ENCODE measurements at regions of chr4 and their contacts with region 1.

Region 1: DNA sequence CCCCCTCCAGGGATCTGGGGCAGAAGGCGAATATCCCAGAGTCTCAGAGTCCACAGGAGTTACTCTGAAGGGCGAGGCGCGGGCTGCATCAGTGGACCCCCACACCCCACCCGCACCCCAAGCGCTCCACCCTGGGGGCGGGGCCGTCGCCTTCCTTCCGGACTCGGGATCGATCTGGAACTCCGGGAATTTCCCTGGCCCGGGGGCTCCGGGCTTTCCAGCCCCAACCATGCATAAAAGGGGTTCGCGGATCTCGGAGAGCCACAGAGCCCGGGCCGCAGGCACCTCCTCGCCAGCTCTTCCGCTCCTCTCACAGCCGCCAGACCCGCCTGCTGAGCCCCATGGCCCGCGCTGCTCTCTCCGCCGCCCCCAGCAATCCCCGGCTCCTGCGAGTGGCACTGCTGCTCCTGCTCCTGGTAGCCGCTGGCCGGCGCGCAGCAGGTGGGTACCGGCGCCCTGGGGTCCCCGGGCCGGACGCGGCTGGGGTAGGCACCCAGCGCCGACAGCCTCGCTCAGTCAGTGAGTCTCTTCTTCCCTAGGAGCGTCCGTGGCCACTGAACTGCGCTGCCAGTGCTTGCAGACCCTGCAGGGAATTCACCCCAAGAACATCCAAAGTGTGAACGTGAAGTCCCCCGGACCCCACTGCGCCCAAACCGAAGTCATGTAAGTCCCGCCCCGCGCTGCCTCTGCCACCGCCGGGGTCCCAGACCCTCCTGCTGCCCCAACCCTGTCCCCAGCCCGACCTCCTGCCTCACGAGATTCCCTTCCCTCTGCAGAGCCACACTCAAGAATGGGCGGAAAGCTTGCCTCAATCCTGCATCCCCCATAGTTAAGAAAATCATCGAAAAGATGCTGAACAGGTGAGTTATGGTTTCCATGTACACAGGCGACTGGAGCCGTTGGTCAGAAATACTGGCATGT is at the start of gene CXCL1:
- DNase-seq: peak; percentile 88
- H3K4me3 Mint-ChIP-seq: peak within 1 kb of the TSS; percentile 88
- H3K27ac Mint-ChIP-seq: peak within 1 kb of the TSS; percentile 29
- H3K4me1 Mint-ChIP-seq: peaks cover 18% of the 10 kb centered on the region
- H3K27me3 Mint-ChIP-seq: no peaks in the 10 kb centered on the region
- CTCF ChIP-seq: no peak
- total RNA-seq, gene CXCL1: 212 and 414 TPM in 2 replicates

Region 2: DNA sequence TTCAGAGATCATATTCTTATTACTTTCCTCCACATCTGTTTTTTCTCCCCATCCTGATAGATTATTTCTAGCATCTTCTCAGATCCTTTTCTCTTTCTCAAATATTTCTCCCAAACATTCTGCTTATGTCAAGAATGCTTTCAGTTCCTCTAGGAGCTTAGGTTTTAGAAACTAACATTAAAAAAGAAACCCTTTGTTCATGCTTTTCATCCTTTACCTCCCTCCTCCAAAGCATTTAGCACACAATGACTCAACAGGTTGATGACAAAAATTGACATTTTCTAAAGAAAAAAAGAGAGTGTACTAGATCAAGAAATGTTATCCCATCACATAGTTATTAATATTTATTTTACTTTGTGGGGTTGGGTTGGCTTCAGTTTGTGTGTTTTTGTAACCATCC is 481.8 kb before region 1 on chr4:
- CTCF ChIA-PET with region 1: no interaction called
- intact Hi-C with region 1: no loop called
- DNase-seq: no peak
- H3K4me3 Mint-ChIP-seq: no peak overlapping the region
- H3K27ac Mint-ChIP-seq: no peak overlapping the region
- H3K4me1 Mint-ChIP-seq: no peaks in the 10 kb centered on the region
- H3K27me3 Mint-ChIP-seq: no peaks in the 10 kb centered on the region
- CTCF ChIP-seq: no peak

Region 3: DNA sequence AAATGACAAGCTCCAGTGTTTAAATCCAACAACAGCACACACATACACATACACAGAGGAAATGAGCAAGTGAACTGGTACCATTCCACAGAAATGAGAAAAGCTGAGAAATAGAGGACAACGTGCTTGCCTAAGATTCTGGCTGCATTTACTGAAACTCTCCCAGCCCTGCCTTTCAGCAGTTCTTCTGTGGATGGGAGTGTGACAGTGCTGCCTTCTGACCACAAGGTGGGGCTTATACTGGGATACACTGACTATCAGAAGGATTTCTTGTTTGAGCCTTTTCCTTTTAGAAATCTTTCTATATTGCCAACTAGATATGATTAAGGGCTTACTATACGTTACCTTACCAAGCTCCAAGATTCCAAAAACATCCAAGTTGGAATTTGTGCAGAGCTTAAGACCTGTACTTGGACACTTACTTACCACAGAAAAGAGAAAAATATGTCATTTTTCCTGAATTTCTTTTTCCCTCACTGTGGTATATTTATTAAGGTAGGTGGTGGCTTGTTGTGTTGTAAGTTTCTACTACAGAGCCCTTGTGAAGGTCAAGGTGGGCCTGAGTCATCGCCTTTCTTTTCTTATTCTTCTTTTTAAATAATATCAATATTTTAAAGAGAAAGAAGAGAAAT is 139.7 kb before region 1 on chr4:
- CTCF ChIA-PET with region 1: interaction called, 8 read pairs
- intact Hi-C with region 1: loop called (anchors 5 kb)
- DNase-seq: peak; percentile 59
- H3K4me3 Mint-ChIP-seq: peak overlapping the region; percentile 20
- H3K27ac Mint-ChIP-seq: peak overlapping the region; percentile 89
- H3K4me1 Mint-ChIP-seq: peaks cover 82% of the 10 kb centered on the region
- H3K27me3 Mint-ChIP-seq: no peaks in the 10 kb centered on the region
- CTCF ChIP-seq: peak; percentile 47

Region 4: DNA sequence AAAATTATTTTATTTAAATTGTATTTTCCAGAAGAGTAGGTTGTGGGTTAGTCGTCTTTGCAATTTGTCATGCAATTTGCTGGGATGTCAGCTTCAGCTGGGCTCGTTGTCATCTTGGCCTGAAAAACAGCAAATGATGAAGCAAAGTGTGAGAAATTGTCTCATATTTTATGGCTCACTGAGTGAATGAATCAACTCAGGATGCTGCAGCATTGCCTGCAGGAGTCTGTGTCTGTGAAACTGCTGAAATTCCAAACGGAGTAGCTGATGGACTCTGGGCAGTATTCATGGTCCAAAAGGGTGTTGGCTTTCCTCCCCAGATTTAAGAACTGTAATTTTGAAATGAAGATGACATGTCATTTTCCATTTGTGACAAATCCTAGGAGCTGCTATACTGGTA is 91.8 kb before region 1 on chr4:
- CTCF ChIA-PET with region 1: interaction called, 5 read pairs
- intact Hi-C with region 1: loop called (anchors 2 kb)
- DNase-seq: no peak
- H3K4me3 Mint-ChIP-seq: no peak overlapping the region
- H3K27ac Mint-ChIP-seq: no peak overlapping the region
- H3K4me1 Mint-ChIP-seq: peaks cover 11% of the 10 kb centered on the region
- H3K27me3 Mint-ChIP-seq: no peaks in the 10 kb centered on the region
- CTCF ChIP-seq: no peak

Region 5: DNA sequence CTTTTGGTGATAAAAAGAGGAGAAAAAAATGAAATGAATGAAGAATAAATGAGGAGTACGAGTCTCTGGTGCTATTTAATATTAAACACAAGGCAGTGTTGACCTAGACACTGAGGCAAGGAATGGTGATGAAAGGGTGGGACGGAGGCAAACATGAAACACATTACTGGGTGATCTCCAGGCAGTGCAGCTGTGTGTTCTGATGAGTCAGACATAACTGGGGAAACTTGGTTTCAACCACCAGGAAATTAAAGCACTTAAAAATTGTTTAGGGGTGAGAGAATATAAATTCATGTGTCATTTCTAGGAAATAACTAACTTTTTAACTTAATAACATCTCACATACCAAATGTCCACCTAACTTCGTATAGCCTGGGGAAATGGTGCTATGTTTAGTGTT is 52.6 kb before region 1 on chr4:
- CTCF ChIA-PET with region 1: interaction called, 4 read pairs
- intact Hi-C with region 1: loop called (anchors 2 kb)
- DNase-seq: peak; percentile 49
- H3K4me3 Mint-ChIP-seq: peak overlapping the region; percentile 5
- H3K27ac Mint-ChIP-seq: peak overlapping the region; percentile 95
- H3K4me1 Mint-ChIP-seq: peaks cover 57% of the 10 kb centered on the region
- H3K27me3 Mint-ChIP-seq: no peaks in the 10 kb centered on the region
- CTCF ChIP-seq: no peak

Region 6: DNA sequence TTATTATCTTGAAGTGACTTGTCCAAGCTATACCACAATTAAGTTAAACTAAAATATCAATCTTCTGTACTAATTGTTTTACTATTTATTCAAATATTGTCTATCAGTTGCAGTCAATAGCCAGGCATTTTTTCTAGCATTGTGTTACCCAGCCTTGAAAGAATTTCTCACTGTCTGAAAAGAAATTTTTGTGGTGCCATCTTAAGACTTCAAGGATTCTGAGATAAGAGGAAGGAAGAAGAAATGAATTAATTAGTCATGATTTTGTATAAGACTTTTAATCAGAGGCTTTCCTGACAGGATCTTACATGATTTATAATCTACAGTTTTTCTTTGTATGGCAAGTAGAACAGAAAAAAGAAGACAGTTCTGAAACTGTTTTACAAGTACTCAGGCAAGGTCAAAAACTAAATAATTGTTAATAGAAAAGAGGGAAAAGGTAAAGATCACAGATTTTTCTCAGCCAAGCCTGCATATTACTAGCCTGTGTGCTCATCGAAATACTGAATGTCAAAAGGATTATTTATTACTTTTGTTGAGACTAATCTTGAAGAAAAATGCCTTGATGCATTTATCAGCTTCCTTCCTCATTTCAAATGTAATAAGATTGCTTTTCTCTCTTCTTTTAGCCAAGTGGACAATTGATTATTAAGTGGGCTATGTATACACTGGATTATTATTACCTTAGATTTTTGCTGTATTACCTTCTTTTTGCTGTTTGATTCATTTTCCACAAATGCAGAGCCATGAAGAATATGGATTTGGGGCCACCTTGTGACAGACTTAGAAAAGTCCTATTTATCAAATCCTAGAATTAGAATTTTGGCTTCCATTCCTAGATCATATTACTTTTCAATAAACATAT is 53.6 kb after region 1 on chr4:
- CTCF ChIA-PET with region 1: no interaction called
- intact Hi-C with region 1: loop called (anchors 2 kb)
- DNase-seq: peak; percentile 41
- H3K4me3 Mint-ChIP-seq: no peak overlapping the region
- H3K27ac Mint-ChIP-seq: peak overlapping the region; percentile 23
- H3K4me1 Mint-ChIP-seq: peaks cover 22% of the 10 kb centered on the region
- H3K27me3 Mint-ChIP-seq: no peaks in the 10 kb centered on the region
- CTCF ChIP-seq: no peak

Region 7: GRCh38 chr4:73998040-73999011 is 128.9 kb after region 1 on chr4 and contains the start of gene CXCL5:
- CTCF ChIA-PET with region 1: interaction called, 3 read pairs
- intact Hi-C with region 1: loop called (anchors 10 kb)
- DNase-seq: peak; percentile 91
- H3K4me3 Mint-ChIP-seq: peak within 1 kb of the TSS; percentile 91
- H3K27ac Mint-ChIP-seq: peak within 1 kb of the TSS; percentile 96
- H3K4me1 Mint-ChIP-seq: peaks cover 31% of the 10 kb centered on the region
- H3K27me3 Mint-ChIP-seq: no peaks in the 10 kb centered on the region
- CTCF ChIP-seq: no peak
- total RNA-seq, gene CXCL5: 1,110 and 1,906 TPM in 2 replicates

Region 8: GRCh38 chr4:74038161-74039064 is 169.0 kb after region 1 on chr4 and contains the start of gene CXCL3:
- CTCF ChIA-PET with region 1: no interaction called
- intact Hi-C with region 1: loop called (anchors 5 kb)
- DNase-seq: peak; percentile 94
- H3K4me3 Mint-ChIP-seq: peak within 1 kb of the TSS; percentile 84
- H3K27ac Mint-ChIP-seq: peak within 1 kb of the TSS; percentile 91
- H3K4me1 Mint-ChIP-seq: peaks cover 42% of the 10 kb centered on the region
- H3K27me3 Mint-ChIP-seq: no peaks in the 10 kb centered on the region
- CTCF ChIP-seq: no peak
- total RNA-seq, gene CXCL3: 80.8 and 153 TPM in 2 replicates

Region 9: DNA sequence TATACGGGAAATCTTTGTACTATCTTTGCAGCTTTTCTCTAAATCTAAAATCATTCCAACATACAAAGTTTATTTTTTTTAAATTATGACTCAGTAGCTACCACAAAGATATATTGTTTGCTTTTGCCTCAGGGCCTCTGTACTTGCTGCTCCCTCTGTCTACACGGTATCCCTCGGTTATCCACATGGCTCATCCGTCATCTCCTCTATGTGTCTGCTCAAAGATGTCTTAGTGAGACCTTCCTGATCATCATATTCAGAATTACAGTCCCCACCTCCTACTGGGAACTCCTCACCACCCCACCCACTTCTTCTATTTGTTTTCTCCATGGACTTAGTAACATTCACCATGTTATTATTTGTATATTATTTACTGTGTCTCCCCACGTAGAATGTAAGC is 1171.3 kb after region 1 on chr4:
- CTCF ChIA-PET with region 1: no interaction called
- intact Hi-C with region 1: no loop called
- DNase-seq: no peak
- H3K4me3 Mint-ChIP-seq: no peak overlapping the region
- H3K27ac Mint-ChIP-seq: no peak overlapping the region
- H3K4me1 Mint-ChIP-seq: no peaks in the 10 kb centered on the region
- H3K27me3 Mint-ChIP-seq: no peaks in the 10 kb centered on the region
- CTCF ChIP-seq: no peak

Measured in Calu3 (cell line).